WTC11 (cell line): ENCODE measurements at regions of chr16 and their contacts with region 1.

Region 1: DNA sequence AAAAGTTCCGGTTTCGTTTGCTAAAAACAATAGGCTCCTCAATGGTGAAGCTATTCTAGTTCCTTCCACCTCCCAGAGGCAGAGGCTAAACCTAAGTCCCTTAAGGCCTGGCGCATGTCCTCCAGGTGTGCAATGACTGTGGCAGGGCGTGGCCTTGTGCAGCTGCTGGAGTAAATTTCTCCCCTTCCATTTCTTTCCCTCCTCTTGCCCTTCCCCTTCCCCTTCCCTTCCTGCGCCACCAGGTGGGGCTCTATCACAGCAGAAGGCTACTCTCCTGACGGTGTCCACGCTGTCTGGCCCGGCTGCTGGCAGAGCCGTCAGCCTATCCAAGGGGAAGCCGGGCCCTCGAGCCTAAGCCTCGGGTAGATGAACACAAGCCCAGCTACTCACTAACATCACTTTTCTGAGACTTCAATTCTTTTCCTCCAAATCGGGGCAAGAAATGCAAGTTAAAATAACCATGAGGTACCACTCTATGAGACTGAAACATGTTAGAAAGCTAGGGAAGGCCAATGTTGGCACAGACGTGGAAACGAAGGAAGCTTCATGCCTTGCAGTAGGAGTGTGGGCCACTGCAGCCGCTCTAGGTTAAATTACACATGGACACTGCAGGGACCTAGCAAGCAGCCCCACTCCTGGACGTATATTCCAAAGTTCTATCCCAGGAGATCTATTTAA is 34.4 kb downstream of the C16orf78 start:
- DNase-seq: peak; percentile 93
- ATAC-seq: peak; percentile 100
- H3K4me3 Mint-ChIP-seq: no peak overlapping the region
- H3K27ac Mint-ChIP-seq: no peak overlapping the region
- H3K4me1 Mint-ChIP-seq: peaks cover 3% of the 10 kb centered on the region
- H3K27me3 Mint-ChIP-seq: peaks cover 2% of the 10 kb centered on the region; the same call in 1 of the 2 replicates
- CTCF ChIP-seq: peak; percentile 81

Region 2: GRCh38 chr16:49307176-49307575 is 100.8 kb before region 1 on chr16:
- CTCF ChIA-PET with region 1: no interaction called
- POLR2A ChIA-PET with region 1: no interaction called
- DNase-seq: no peak
- ATAC-seq: no peak
- H3K4me3 Mint-ChIP-seq: no peak overlapping the region
- H3K27ac Mint-ChIP-seq: no peak overlapping the region
- H3K4me1 Mint-ChIP-seq: peaks cover 5% of the 10 kb centered on the region
- H3K27me3 Mint-ChIP-seq: peaks cover 2% of the 10 kb centered on the region; the same call in 1 of the 2 replicates
- CTCF ChIP-seq: no peak

Region 3: GRCh38 chr16:49362230-49362629 is 45.8 kb before region 1 on chr16:
- CTCF ChIA-PET with region 1: no interaction called
- POLR2A ChIA-PET with region 1: no interaction called
- DNase-seq: no peak
- ATAC-seq: peak; percentile 82
- H3K4me3 Mint-ChIP-seq: no peak overlapping the region
- H3K27ac Mint-ChIP-seq: no peak overlapping the region
- H3K4me1 Mint-ChIP-seq: peaks cover 47% of the 10 kb centered on the region
- H3K27me3 Mint-ChIP-seq: peaks cover 7% of the 10 kb centered on the region; the same call in 1 of the 2 replicates
- CTCF ChIP-seq: no peak

Region 4: GRCh38 chr16:49437344-49437743 is 29.3 kb after region 1 on chr16:
- CTCF ChIA-PET with region 1: interaction called, 12 read pairs
- POLR2A ChIA-PET with region 1: no interaction called
- DNase-seq: no peak
- ATAC-seq: peak; percentile 36; the same call in 1 of the 2 replicates
- H3K4me3 Mint-ChIP-seq: no peak overlapping the region
- H3K27ac Mint-ChIP-seq: no peak overlapping the region
- H3K4me1 Mint-ChIP-seq: peaks cover 21% of the 10 kb centered on the region
- H3K27me3 Mint-ChIP-seq: no peaks in the 10 kb centered on the region; the same call in 1 of the 2 replicates
- CTCF ChIP-seq: no peak

Region 5: DNA sequence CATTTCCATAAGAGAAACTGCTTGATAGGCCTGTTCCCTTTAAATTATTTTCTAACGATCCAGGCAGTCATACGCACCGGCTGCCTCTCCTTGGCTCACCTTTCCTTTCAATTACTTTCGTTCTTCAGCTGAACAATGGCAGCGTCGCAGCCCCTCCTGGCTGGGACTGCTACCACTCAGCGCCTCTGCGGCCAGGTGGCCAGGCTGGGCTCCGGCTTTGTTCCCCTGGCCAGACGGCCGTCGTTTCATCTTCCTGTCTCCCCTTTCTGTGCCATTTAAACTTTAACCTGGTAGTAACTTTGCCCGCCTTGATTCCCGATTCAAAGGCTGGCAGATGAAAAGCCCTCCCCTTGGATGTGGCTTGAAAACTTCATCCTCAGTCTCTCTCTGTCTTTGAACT is 44.6 kb after region 1 on chr16:
- CTCF ChIA-PET with region 1: interaction called, 12 read pairs
- POLR2A ChIA-PET with region 1: no interaction called
- DNase-seq: peak; percentile 39
- ATAC-seq: peak; percentile 85
- H3K4me3 Mint-ChIP-seq: peak overlapping the region; percentile 0; the same call in 1 of the 2 replicates
- H3K27ac Mint-ChIP-seq: 0 out of 2 replicates have a peak overlapping the region, but pooled peaks have one; percentile 6
- H3K4me1 Mint-ChIP-seq: peaks cover 17% of the 10 kb centered on the region
- H3K27me3 Mint-ChIP-seq: peaks cover 3% of the 10 kb centered on the region; the same call in 1 of the 2 replicates
- CTCF ChIP-seq: no peak

Region 6: DNA sequence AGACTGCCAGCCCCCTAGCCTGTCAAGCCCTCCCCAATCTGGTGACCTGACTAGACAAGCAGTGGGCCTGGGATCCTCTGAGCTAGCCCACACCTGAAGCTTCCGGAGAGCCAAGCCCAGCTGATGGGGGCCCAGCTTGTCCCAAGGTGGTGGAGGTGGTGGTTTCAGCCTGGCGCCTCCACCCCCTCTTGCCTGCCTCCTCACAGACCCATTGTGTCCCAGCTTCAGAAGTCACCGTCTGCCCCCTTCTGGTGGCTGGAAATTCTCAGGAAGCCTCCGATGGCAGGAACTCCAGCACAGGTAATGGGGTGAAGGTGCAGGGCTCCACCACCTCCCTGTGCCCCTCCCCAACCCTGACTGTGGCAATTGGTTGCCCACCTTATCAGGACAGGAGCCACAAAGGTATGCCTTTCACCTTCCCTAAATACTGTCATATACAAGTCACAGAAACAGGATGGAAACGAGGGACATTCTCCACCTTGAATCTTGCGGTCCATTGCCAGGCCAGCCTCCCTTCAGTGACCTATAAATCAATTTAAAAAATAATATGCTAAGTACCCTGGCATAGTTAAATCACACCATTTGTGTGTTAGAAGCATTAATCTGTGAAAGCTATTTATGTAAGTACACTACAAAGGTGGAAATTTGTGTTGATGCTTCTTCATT is 513.9 kb after region 1 on chr16:
- CTCF ChIA-PET with region 1: interaction called, 19 read pairs
- POLR2A ChIA-PET with region 1: no interaction called
- DNase-seq: peak; percentile 87
- ATAC-seq: peak; percentile 92
- H3K4me3 Mint-ChIP-seq: no peak overlapping the region
- H3K27ac Mint-ChIP-seq: no peak overlapping the region
- H3K4me1 Mint-ChIP-seq: peaks cover 3% of the 10 kb centered on the region
- H3K27me3 Mint-ChIP-seq: no peaks in the 10 kb centered on the region
- CTCF ChIP-seq: peak; percentile 55; the same call in 1 of the 2 replicates